Activated CD8-positive, alpha-beta T cell treated with anti-CD3 and anti-CD28 coated beads for 36 hours (primary cell): ENCODE measurements at regions of chr7 and their contacts with region 1.

Region 1: GRCh38 chr7:50379082-50379481 is 71.1 kb downstream of the FIGNL1 start:
- DNase-seq: no peak
- ATAC-seq: peak; percentile 13
- H3K4me3 Mint-ChIP-seq: no peak overlapping the region
- H3K27ac Mint-ChIP-seq: peak overlapping the region; percentile 81
- H3K4me1 Mint-ChIP-seq: peaks cover 90% of the 10 kb centered on the region
- H3K27me3 Mint-ChIP-seq: no peaks in the 10 kb centered on the region
- CTCF ChIP-seq: no peak

Region 2: DNA sequence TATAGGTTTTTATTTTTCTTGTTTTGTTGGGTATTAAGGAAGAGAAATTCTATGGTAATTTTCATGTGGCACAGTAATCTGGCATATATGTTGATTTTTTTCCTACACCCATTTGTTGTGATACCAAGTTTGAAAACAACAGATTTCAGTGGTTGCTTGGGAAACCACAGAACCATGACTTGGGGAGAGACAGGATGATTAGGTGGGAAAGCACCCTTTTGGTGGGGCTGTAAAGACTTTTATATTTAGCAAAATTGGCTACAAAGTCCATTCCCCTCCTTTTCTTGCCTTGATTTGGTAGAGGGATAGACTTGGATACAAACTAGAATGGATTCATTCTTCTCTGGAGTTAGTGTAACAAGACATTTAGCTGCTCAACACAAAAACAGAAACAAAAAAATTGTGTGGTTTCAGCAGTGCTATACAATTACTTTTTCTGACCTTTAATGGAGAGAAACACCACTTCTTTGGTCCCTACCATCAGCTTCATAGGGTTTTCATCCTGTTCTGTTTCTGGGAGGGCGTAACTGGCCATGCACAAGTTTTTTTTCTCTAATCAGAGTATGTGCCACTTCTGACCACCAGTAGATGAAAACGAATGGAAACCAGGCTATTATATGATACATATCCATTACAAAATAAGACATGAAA is 18.4 kb after region 1 on chr7:
- CTCF ChIA-PET with region 1: interaction called, 3 read pairs
- POLR2A ChIA-PET with region 1: interaction called, 55 read pairs
- intact Hi-C with region 1: no loop called
- DNase-seq: peak; percentile 69
- ATAC-seq: peak; percentile 16
- H3K4me3 Mint-ChIP-seq: no peak overlapping the region
- H3K27ac Mint-ChIP-seq: peak overlapping the region; percentile 88
- H3K4me1 Mint-ChIP-seq: peaks cover 81% of the 10 kb centered on the region
- H3K27me3 Mint-ChIP-seq: no peaks in the 10 kb centered on the region
- CTCF ChIP-seq: no peak